HepG2 (cell line): ENCODE measurements at regions of chr17 and their contacts with region 1.

Region 1: DNA sequence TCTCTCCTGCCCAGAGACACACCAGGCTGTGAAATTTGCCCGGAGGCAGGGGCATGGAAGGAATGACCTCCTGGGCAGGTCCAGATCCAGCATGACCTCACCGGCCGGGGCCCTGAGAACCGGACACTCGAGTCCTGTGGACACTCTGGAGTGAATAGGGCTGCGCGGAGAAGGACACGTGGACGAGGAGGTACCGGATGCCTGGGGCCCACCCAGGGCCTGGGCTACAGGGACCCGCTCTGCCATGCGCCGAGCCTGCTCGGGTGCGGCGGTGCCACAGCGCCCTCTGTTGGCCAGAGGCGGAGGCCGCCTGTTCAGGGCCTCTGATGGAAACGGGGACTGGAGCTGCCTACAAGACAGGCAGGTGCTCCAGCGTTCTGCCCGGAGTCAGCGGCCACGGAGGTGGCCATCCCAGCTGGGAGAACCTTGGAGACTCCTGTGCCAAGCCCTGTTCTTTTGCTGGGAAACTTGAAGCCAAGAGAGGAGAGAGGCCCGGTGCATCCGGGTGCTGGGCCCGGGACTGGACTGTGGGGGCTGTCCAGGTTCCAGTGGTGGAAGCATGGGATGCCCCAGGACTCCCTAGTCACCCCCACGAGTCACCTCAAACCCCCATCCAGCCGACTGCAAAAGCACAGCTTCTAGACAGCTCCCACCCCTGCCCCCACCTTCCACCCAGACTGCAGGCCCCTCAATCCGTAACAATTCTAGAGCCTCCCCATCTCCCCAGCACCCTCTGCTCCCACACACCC is 19.3 kb upstream of the NXPH3 start:
- DNase-seq: peak; percentile 65
- ATAC-seq: peak; percentile 92
- H3K4me3 ChIP-seq: peak overlapping the region; percentile 13 to 65 (median 21); a peak in 5 of 6 replicates
- H3K27ac ChIP-seq: no peak overlapping the region
- H3K4me1 ChIP-seq: peaks cover 45% of the 10 kb centered on the region
- H3K27me3 ChIP-seq: peaks cover 14 to 31% of the 10 kb centered on the region in 2 experiments
- CTCF ChIP-seq: peak; percentile 100
- EP300 ChIP-seq: no peak
- POLR2A ChIP-seq: no peak
- RAD21 ChIP-seq: peak; percentile 98

Region 2: GRCh38 chr17:49315551-49316257 is 240.7 kb before region 1 on chr17:
- CTCF ChIA-PET with region 1: no interaction called
- POLR2A ChIA-PET with region 1: no interaction called
- in situ Hi-C with region 1: no loop called
- intact Hi-C with region 1: loop called (anchors 10 kb)
- DNase-seq: peak; percentile 78
- ATAC-seq: peak; percentile 97
- H3K4me3 ChIP-seq: no peak overlapping the region
- H3K27ac ChIP-seq: no peak overlapping the region
- H3K4me1 ChIP-seq: peaks cover 5% of the 10 kb centered on the region; the same call in 1 of the 2 replicates
- H3K27me3 ChIP-seq: no peaks in the 10 kb centered on the region
- CTCF ChIP-seq: peak; percentile 86
- EP300 ChIP-seq: no peak; a peak in 1 of 4 replicates
- POLR2A ChIP-seq: no peak
- RAD21 ChIP-seq: peak; percentile 90

Region 3: GRCh38 chr17:49407981-49408501 is 148.4 kb before region 1 on chr17:
- CTCF ChIA-PET with region 1: interaction called, 75 read pairs
- POLR2A ChIA-PET with region 1: interaction called, 3 read pairs
- in situ Hi-C with region 1: loop called (anchors 5 kb)
- intact Hi-C with region 1: loop called (anchors 1 kb)
- DNase-seq: peak; percentile 87
- ATAC-seq: peak; percentile 98
- H3K4me3 ChIP-seq: no peak overlapping the region
- H3K27ac ChIP-seq: no peak overlapping the region
- H3K4me1 ChIP-seq: peaks cover 19% of the 10 kb centered on the region
- H3K27me3 ChIP-seq: no peaks in the 10 kb centered on the region
- CTCF ChIP-seq: peak; percentile 99
- EP300 ChIP-seq: peak in 1 of 2 experiments; percentile 27; a peak in 1 of 4 replicates
- POLR2A ChIP-seq: no peak
- RAD21 ChIP-seq: peak; percentile 98

Region 4: DNA sequence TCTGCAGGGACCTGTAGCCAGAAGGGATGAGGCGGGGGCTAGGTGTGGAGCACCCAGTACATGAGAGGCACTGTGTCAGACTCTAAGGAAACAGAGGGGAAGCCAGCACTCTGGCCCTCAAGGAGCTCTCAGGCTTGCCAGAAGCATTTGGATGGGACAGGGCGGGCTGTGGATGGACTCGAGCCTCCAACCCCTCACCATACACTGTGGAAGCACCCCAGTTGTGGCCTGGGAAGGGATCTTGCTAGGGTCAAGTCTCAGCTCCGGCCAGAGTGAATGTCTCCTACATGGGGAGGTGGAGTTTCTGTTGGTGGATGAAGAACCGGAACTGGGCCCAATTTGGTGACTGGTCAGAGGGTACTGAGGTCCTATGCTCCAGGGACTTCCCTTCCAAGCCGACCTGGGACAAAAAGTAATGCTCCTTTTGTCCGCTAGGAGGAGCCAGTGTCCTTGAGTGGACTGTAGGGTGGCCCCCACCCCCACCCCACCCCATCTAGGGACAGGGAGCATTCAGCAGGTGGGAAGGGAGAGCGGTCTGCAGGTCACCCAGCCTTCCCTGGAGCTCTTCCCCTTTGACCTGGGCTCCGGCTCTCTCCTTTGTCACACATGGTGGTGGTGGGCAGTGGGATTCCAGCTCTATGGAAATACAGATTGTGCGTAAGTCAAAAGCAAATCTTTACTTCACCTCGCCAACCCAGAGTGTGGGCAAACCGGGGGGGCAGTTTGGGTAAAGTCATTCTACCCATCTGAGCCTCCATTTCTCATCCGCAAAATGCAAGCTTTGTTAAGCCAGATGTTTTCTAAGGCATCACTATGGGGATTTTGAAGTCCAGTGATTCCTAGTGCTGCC is 121.4 kb before region 1 on chr17:
- CTCF ChIA-PET with region 1: interaction called, 27 read pairs
- POLR2A ChIA-PET with region 1: interaction called, 3 read pairs
- in situ Hi-C with region 1: no loop called
- intact Hi-C with region 1: loop called (anchors 1 kb)
- DNase-seq: peak; percentile 74
- ATAC-seq: peak; percentile 80
- H3K4me3 ChIP-seq: no peak overlapping the region
- H3K27ac ChIP-seq: no peak overlapping the region
- H3K4me1 ChIP-seq: peaks cover 44% of the 10 kb centered on the region
- H3K27me3 ChIP-seq: peaks cover 4 to 57% of the 10 kb centered on the region in 2 experiments
- CTCF ChIP-seq: peak; percentile 83
- EP300 ChIP-seq: no peak
- POLR2A ChIP-seq: no peak
- RAD21 ChIP-seq: peak; percentile 63; the same call in 1 of the 2 replicates

Region 5: DNA sequence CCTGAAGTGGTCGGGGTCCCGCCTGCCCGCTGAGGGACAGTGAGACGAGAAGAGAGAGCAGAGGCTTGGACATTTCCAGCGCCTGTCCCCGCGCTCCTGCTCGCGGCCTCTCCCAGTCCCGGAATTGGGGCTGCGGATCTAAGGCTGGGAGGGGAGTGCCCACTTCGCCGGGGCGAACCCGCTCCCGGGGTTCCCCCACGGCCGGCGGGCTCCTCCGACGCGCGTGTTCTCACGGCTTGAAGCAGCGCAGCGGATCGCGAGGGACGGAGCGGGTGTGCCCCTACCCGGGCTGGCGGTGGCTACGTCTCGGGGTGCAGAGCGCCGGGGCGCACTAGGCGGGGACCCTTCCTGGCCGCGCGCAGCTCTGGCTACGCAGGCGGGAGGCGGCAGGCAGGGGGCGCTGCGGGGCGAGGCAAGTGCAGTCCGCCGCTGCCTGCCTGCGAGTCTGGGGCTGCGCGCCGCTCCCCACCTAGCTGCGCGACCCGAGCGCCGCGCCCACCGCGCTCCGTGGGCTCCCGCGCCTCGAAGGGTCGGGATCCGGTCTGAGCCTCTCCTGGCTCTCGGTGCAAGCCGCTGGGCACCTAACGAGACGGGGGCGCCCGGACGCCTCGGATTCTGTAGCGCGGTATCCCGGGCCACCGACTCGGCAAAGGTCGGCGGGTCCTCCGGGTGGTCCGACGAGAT is 60.1 kb before region 1 on chr17:
- CTCF ChIA-PET with region 1: interaction called, 23 read pairs
- POLR2A ChIA-PET with region 1: interaction called, 3 read pairs
- in situ Hi-C with region 1: loop called (anchors 5 kb)
- intact Hi-C with region 1: no loop called
- DNase-seq: no peak
- ATAC-seq: peak; percentile 92
- H3K4me3 ChIP-seq: peak overlapping the region; percentile 44 to 70 (median 55); a peak in 5 of 6 replicates
- H3K27ac ChIP-seq: no peak overlapping the region
- H3K4me1 ChIP-seq: peaks cover 25% of the 10 kb centered on the region
- H3K27me3 ChIP-seq: peaks cover 22 to 83% of the 10 kb centered on the region in 2 experiments
- CTCF ChIP-seq: peak; percentile 89
- EP300 ChIP-seq: no peak
- POLR2A ChIP-seq: no peak
- RAD21 ChIP-seq: peak; percentile 89

Region 6: GRCh38 chr17:49515196-49515770 is 41.1 kb before region 1 on chr17:
- CTCF ChIA-PET with region 1: no interaction called
- POLR2A ChIA-PET with region 1: interaction called, 4 read pairs
- in situ Hi-C with region 1: no loop called
- intact Hi-C with region 1: loop called (anchors 2 kb)
- DNase-seq: peak; percentile 79
- ATAC-seq: peak; percentile 95
- H3K4me3 ChIP-seq: peak overlapping the region; percentile 46 to 72 (median 52)
- H3K27ac ChIP-seq: no peak overlapping the region
- H3K4me1 ChIP-seq: peaks cover 32% of the 10 kb centered on the region
- H3K27me3 ChIP-seq: peaks cover 2 to 28% of the 10 kb centered on the region in 2 experiments; a peak in 4 of 5 replicates
- CTCF ChIP-seq: peak; percentile 34; the same call in 1 of the 2 replicates
- EP300 ChIP-seq: no peak
- POLR2A ChIP-seq: peak in 1 of 2 experiments; percentile 72; a peak in 3 of 4 replicates
- RAD21 ChIP-seq: peak; percentile 43; the same call in 1 of the 2 replicates

Region 7: DNA sequence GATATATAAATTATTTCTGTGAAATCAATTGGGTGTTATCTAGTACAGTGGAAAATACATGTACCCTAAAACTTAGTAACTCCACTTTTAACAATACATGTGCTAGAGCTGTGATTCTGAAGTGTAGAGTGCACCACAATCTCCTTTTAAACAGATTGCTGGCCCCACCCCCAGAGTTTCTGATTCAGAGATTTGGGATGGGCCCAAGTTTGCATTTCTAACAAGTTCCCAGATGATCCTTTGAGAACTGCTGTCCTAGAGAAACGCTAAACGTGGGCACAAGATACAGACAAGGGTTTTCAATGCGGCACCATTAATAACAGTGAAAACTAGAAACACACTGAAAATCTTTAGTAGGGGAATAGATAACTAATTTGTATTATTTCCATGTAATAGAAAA is 68.5 kb after region 1 on chr17:
- CTCF ChIA-PET with region 1: no interaction called
- POLR2A ChIA-PET with region 1: no interaction called
- in situ Hi-C with region 1: no loop called
- intact Hi-C with region 1: no loop called
- DNase-seq: no peak
- ATAC-seq: no peak
- H3K4me3 ChIP-seq: no peak overlapping the region
- H3K27ac ChIP-seq: no peak overlapping the region
- H3K4me1 ChIP-seq: peaks cover 6% of the 10 kb centered on the region
- H3K27me3 ChIP-seq: no peaks in the 10 kb centered on the region
- CTCF ChIP-seq: no peak
- EP300 ChIP-seq: no peak
- POLR2A ChIP-seq: no peak
- RAD21 ChIP-seq: no peak

Region 8: GRCh38 chr17:49637050-49637449 is 80.7 kb after region 1 on chr17:
- CTCF ChIA-PET with region 1: no interaction called
- POLR2A ChIA-PET with region 1: no interaction called
- in situ Hi-C with region 1: no loop called
- intact Hi-C with region 1: no loop called
- DNase-seq: no peak
- ATAC-seq: no peak
- H3K4me3 ChIP-seq: no peak overlapping the region
- H3K27ac ChIP-seq: no peak overlapping the region
- H3K4me1 ChIP-seq: peaks cover 41% of the 10 kb centered on the region
- H3K27me3 ChIP-seq: no peaks in the 10 kb centered on the region
- CTCF ChIP-seq: no peak
- EP300 ChIP-seq: no peak
- POLR2A ChIP-seq: no peak
- RAD21 ChIP-seq: no peak